ENCODE measurements at regions of chr1 and their contacts with region 1.

Region 1: GRCh38 chr1:12124693-12125421 is 41.9 kb upstream of the TNFRSF1B start:
- DNase-seq: peak; percentile 88
- ATAC-seq: peak; percentile 74

Region 2: DNA sequence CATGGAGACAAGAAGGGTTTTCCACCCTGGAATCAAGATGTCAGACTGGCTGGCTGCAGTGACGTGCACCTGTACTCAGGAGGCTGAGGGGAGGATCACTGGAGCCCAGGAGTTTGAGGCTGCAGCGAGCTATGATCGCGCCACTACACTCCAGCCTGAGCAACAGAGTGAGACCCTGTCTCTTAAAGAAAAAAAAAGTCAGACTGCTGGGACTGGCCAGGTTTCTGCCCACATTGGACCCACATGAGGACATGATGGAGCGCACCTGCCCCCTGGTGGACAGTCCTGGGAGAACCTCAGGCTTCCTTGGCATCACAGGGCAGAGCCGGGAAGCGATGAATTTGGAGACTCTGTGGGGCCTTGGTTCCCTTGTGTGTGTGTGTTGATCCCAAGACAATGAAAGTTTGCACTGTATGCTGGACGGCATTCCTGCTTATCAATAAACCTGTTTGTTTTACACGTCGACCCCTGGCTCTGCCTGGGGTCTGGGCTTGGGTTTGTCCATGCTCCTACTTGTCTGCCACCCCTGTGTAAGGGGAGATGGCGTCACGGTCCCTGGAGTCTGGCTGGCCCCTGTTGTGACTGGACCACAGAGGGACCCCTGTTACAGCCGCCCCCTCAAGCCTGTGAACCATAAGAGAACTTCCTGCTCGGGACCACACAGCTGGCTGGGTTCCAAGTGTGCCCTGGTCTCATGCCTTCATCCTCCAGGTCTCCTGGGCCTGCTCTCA is 84.1 kb after region 1 on chr1:
- intact Hi-C with region 1: loop called (anchors 2 kb)
- DNase-seq: peak; percentile 94
- ATAC-seq: peak; percentile 88

Region 3: DNA sequence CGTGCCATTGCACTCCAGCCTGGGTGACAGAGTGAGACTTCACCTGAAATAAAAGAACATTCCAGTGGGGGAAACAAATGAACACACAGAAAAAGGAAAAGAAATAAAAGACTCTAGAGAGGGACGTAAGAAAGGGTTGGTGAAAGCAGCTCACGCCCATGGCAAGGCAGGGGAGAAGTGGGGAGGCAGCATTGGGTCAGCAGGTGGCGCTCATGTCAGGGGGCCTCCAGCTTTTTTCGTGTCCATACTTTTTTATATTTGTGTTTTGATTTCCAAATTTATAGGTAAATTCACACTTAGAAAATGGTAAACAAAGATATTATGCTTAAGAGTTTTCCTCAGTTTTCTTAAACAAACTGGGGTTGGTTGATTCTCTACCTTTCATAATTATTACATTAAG is 150.5 kb after region 1 on chr1:
- intact Hi-C with region 1: loop called (anchors 5 kb)
- DNase-seq: peak; percentile 78
- ATAC-seq: peak; percentile 74

Measured in sciatic nerve (tissue), 2 donors.